ENCODE measurements at regions of chr1 and their contacts with region 1.

Region 1: DNA sequence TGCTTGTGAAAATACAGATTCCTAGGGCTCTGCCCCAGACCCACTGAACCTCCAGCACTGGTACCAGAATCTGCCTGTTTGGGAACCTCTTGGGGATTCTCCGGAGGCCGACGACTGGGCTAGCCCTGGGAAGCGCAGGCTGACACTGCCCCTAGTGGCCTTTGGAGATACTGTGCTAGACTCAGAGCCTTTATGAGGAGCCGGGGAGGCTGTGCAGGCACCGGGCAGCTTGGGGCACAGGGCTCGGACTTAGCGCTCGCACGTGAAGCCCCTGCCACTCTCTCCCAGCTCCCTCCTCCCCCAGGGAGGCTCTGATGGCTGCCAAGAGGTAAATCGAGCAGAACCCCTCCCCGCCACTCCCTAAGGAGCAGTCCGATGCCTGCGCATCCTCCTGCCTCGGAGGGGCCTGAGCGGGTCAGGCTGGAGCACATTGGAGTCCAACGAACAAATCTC is 144.6 kb upstream of the TNR start:
- DNase-seq: peak; percentile 12
- ATAC-seq: peak; percentile 98
- H3K4me3 ChIP-seq: no peak overlapping the region
- H3K27ac ChIP-seq: no peak overlapping the region
- H3K4me1 ChIP-seq: no peaks in the 10 kb centered on the region
- H3K27me3 ChIP-seq: no peaks in the 10 kb centered on the region
- CTCF ChIP-seq: peak; percentile 91

Region 2: GRCh38 chr1:175373786-175374623 is 514.0 kb before region 1 on chr1:
- CTCF ChIA-PET with region 1: interaction called, 3 read pairs
- POLR2A ChIA-PET with region 1: no interaction called
- in situ Hi-C with region 1: no loop called
- intact Hi-C with region 1: loop called (anchors 5 kb)
- DNase-seq: no peak
- ATAC-seq: peak; percentile 71; the same call in 1 of the 2 replicates
- H3K4me3 ChIP-seq: no peak overlapping the region
- H3K27ac ChIP-seq: no peak overlapping the region
- H3K4me1 ChIP-seq: no peaks in the 10 kb centered on the region
- H3K27me3 ChIP-seq: no peaks in the 10 kb centered on the region
- CTCF ChIP-seq: peak; percentile 80

Region 3: DNA sequence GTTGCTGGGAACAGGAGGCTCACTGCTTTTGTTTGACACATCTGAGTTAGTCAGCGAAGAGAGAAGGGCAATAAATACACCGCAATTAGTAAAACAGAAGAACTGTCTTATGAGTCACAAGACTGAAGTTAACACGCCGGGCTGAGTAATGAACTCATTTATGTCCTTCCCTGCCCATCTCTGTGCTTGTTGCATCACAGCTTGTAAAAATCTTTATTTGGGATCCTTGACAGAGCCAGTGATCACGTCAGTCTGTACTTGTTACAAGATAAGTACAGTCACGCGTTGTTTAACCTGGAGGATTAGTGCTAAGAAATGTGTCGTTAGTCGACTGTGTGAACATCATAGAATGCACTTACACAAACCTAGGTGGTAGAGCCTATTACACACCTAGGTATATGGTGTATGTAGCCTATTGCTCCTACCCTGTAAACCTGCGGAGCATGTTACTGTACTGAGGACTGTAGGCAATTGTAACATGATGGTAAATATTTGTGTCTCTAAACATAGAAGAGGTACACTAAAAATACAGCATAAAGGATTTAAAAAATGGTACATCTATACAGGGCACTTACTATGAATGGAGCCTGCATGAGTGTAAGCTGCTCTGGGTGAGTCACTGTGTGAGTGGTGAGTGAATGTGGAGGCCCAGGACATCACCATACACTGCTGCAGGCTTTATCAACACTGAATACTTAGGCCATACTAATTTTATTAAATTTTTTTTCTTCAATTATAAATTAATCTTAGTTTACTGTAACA is 416.8 kb before region 1 on chr1:
- CTCF ChIA-PET with region 1: no interaction called
- POLR2A ChIA-PET with region 1: no interaction called
- in situ Hi-C with region 1: no loop called
- intact Hi-C with region 1: loop called (anchors 10 kb)
- DNase-seq: peak; percentile 28
- ATAC-seq: no peak
- H3K4me3 ChIP-seq: no peak overlapping the region
- H3K27ac ChIP-seq: no peak overlapping the region
- H3K4me1 ChIP-seq: no peaks in the 10 kb centered on the region
- H3K27me3 ChIP-seq: peaks cover 3% of the 10 kb centered on the region; the same call in 1 of the 2 replicates
- CTCF ChIP-seq: no peak